AG04450 (cell line): ENCODE measurements at regions of chr17 and their contacts with region 1.

Region 1: DNA sequence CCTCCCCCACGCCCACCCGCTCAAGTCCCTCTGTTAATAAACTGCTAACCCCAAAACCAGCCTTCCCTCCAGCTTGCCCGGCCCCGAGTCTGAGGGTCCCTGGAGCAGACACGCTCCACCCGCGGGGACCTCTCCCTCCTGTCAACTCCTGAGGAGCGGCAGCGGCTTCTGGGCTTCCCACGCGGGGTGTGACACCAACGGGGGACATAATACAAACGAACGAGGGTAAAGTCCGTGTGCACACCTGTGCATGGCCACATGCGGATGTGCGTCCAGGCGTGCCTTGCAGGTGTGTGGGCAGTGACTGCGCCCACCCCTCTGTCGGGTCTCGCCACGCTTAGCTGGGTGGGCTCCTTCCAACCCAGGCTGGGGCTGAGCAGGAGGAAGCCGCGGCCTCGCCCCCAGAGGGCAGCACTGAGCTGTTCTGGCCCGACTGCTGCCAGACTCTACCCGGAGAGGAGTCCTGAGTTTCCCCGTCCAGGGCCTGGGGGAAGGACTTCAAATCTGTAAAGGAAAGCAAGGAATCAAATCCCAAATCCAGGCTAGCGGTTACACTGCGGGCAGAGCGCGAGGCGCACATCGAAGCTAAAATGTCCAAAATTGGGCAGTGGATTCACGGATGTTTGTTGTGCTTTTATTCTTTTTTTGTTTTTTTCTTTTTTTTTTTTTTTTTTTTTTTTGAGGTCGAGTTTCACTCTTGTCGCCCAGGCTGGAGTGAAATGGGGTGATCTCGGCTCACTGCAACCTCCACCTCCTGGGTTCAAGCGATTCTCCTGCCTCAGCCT is 24.2 kb upstream of the KRT17 start:
- DNase-seq: peak; percentile 61
- H3K4me3 ChIP-seq: peak overlapping the region; percentile 55
- H3K27ac ChIP-seq: peak overlapping the region; percentile 47
- H3K27me3 ChIP-seq: peaks cover 3% of the 10 kb centered on the region
- CTCF ChIP-seq: peak; percentile 93

Region 2: GRCh38 chr17:40818733-40819527 is 829.7 kb before region 1 on chr17:
- CTCF ChIA-PET with region 1: interaction called, 18 read pairs
- POLR2A ChIA-PET with region 1: interaction called, 3 read pairs
- DNase-seq: peak; percentile 30
- H3K4me3 ChIP-seq: peak overlapping the region; percentile 73
- H3K27ac ChIP-seq: peak overlapping the region; percentile 80
- H3K27me3 ChIP-seq: no peaks in the 10 kb centered on the region
- CTCF ChIP-seq: no peak

Region 3: GRCh38 chr17:40862985-40863733 is 785.4 kb before region 1 on chr17:
- CTCF ChIA-PET with region 1: interaction called, 77 read pairs
- POLR2A ChIA-PET with region 1: no interaction called
- DNase-seq: no peak
- H3K4me3 ChIP-seq: no peak overlapping the region
- H3K27ac ChIP-seq: no peak overlapping the region
- H3K27me3 ChIP-seq: no peaks in the 10 kb centered on the region
- CTCF ChIP-seq: peak; percentile 55

Region 4: DNA sequence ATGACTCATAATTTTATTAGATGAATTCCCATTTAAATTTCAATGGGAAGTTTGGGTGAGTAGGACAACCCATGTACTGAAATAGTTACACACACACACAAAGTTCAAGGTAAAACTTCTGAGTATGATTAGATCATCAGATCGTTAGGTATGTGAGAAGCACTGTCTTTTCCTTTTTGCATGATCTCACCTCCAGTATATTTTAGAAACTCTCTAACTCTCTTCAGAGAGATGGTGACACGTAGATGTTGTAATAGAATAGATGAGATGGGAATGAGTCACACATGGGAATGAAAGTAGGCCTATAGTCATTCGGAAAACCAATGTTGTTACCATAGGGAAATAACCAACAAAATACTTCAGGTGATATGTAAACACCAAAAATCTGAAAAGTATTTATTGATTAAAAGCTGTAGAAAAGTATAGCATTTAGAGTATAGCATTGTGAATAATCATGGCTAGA is 733.4 kb before region 1 on chr17:
- CTCF ChIA-PET with region 1: interaction called, 38 read pairs
- POLR2A ChIA-PET with region 1: interaction called, 4 read pairs
- DNase-seq: peak; percentile 87
- H3K4me3 ChIP-seq: no peak overlapping the region
- H3K27ac ChIP-seq: no peak overlapping the region
- H3K27me3 ChIP-seq: no peaks in the 10 kb centered on the region
- CTCF ChIP-seq: no peak

Region 5: DNA sequence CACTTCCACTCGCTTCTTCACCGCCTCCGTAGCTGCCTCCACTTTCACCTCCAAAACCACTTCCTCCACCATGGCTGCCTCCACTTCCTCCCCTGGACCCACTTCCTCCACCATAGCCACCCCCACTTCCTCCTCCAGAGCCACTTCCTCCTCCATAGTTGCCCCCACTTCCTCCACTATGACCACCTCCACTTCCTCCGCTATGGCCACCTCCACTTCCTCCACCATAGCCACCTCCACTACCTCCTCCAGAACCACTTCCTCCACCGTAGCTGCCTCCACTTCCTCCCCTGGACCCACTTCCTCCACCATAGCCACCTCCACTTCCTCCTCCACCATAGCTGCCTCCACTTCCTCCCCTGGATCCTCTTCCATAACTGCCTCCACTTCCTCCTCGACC is 81.3 kb before region 1 on chr17:
- CTCF ChIA-PET with region 1: interaction called, 10 read pairs
- POLR2A ChIA-PET with region 1: interaction called, 3 read pairs
- DNase-seq: no peak
- H3K4me3 ChIP-seq: no peak overlapping the region
- H3K27ac ChIP-seq: no peak overlapping the region
- H3K27me3 ChIP-seq: peaks cover 48% of the 10 kb centered on the region
- CTCF ChIP-seq: no peak

Region 6: GRCh38 chr17:41660221-41660711 is 11.7 kb after region 1 on chr17:
- CTCF ChIA-PET with region 1: interaction called, 285 read pairs
- POLR2A ChIA-PET with region 1: interaction called, 4 read pairs
- DNase-seq: no peak
- H3K4me3 ChIP-seq: no peak overlapping the region
- H3K27ac ChIP-seq: no peak overlapping the region
- H3K27me3 ChIP-seq: peaks cover 3% of the 10 kb centered on the region
- CTCF ChIP-seq: no peak